Transverse colon (tissue), 4 donors: ENCODE measurements at regions of chr12 and their contacts with region 1.

Region 1: GRCh38 chr12:81668475-81668874 is 90.7 kb downstream of the PPFIA2 start:
- DNase-seq: no peak
- H3K4me3 ChIP-seq: no peak overlapping the region
- H3K27ac ChIP-seq: no peak overlapping the region
- H3K4me1 ChIP-seq: no peaks in the 10 kb centered on the region
- H3K27me3 ChIP-seq: no peaks in the 10 kb centered on the region
- CTCF ChIP-seq: no peak
- EP300 ChIP-seq: no peak
- POLR2A ChIP-seq: no peak

Region 2: GRCh38 chr12:81389550-81390099 is 278.9 kb before region 1 on chr12:
- in situ Hi-C with region 1: no loop called
- intact Hi-C with region 1: no loop called
- DNase-seq: no peak
- H3K4me3 ChIP-seq: no peak overlapping the region
- H3K27ac ChIP-seq: no peak overlapping the region
- H3K4me1 ChIP-seq: no peaks in the 10 kb centered on the region
- H3K27me3 ChIP-seq: no peaks in the 10 kb centered on the region
- CTCF ChIP-seq: no peak
- EP300 ChIP-seq: no peak
- POLR2A ChIP-seq: no peak

Region 3: DNA sequence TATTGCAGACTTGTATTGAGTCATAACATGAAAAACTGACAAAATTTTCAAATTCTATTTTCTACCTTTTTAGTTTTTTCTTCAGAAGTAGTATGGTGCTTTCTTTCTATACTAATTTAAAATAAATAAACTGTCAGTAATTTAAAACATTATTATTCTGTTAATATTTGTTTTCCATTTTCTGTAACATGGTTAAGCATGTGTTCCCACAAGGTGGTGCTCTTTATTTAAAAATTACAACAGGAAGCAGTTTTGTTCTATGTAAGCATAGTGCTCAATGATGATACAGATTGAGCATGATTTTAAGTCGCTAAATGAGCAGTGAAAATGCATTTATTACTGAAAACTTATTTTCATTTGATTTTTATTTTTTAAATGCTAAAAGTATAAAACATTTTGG is 24.0 kb before region 1 on chr12:
- in situ Hi-C with region 1: no loop called
- intact Hi-C with region 1: no loop called
- DNase-seq: no peak
- H3K4me3 ChIP-seq: no peak overlapping the region
- H3K27ac ChIP-seq: no peak overlapping the region
- H3K4me1 ChIP-seq: no peaks in the 10 kb centered on the region
- H3K27me3 ChIP-seq: no peaks in the 10 kb centered on the region
- CTCF ChIP-seq: peak; percentile 24 to 39 (median 34)
- EP300 ChIP-seq: no peak
- POLR2A ChIP-seq: no peak

Region 4: GRCh38 chr12:82326905-82327503 is 658.5 kb after region 1 on chr12:
- in situ Hi-C with region 1: loop called in 1 of 4 experiments (anchors 25 kb)
- intact Hi-C with region 1: no loop called
- DNase-seq: no peak
- H3K4me3 ChIP-seq: no peak overlapping the region
- H3K27ac ChIP-seq: no peak overlapping the region
- H3K4me1 ChIP-seq: peaks cover 0 to 18% (median 7%) of the 10 kb centered on the region in 4 donors
- H3K27me3 ChIP-seq: no peaks in the 10 kb centered on the region
- CTCF ChIP-seq: peak in 4 of 5 experiments; percentile 26 to 50 (median 42)
- EP300 ChIP-seq: no peak
- POLR2A ChIP-seq: no peak